HEK293 (cell line): ENCODE measurements at regions of chr1 and their contacts with region 1.

Region 1: DNA sequence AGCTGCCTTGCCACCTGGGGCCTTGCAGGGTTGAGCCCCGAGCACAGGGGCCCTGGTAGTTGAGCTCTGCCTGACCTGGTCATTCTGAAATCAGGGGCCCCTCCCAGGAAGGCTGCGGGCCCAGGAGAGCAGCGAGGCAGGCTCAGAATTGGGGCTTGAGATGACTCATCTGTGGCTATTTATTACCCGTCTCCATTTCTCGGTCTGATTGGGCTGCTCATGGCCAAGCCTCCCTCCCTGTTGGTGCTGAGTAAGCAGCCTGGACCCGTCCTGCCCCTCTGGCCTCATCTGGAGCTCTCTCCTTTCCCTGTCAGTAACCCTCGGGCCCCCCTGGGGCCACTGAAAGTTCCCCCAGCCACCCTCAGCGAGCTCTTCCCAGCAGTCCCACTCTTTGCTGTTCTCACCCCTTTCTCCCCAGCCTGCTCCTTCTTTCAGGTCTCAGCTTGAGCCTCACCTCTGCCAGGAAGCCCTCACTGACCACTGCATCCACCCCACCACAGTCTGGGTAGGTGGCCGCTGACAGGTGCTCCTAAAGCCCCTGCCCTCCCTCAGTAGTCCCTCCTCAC is 11.0 kb upstream of the TNFRSF8 start:
- H3K4me3 ChIP-seq: no peak overlapping the region
- H3K27ac ChIP-seq: no peak overlapping the region
- H3K4me1 ChIP-seq: no peaks in the 10 kb centered on the region
- CTCF ChIP-seq: no peak

Region 2: GRCh38 chr1:11961230-11961629 is 90.9 kb before region 1 on chr1:
- CTCF ChIA-PET with region 1: no interaction called
- POLR2A ChIA-PET with region 1: no interaction called
- H3K4me3 ChIP-seq: no peak overlapping the region
- H3K27ac ChIP-seq: no peak overlapping the region; the same call in 1 of the 2 replicates
- H3K4me1 ChIP-seq: no peaks in the 10 kb centered on the region
- CTCF ChIP-seq: no peak

Region 3: GRCh38 chr1:12078938-12079861 is 27.1 kb after region 1 on chr1:
- CTCF ChIA-PET with region 1: interaction called, 15 read pairs
- POLR2A ChIA-PET with region 1: no interaction called
- H3K4me3 ChIP-seq: no peak overlapping the region
- H3K27ac ChIP-seq: no peak overlapping the region
- H3K4me1 ChIP-seq: no peaks in the 10 kb centered on the region
- CTCF ChIP-seq: peak; percentile 63

Region 4: GRCh38 chr1:12143631-12144155 is 91.6 kb after region 1 on chr1:
- CTCF ChIA-PET with region 1: no interaction called
- POLR2A ChIA-PET with region 1: no interaction called
- H3K4me3 ChIP-seq: no peak overlapping the region
- H3K27ac ChIP-seq: peak overlapping the region; percentile 17; the same call in 1 of the 2 replicates
- H3K4me1 ChIP-seq: peaks cover 6% of the 10 kb centered on the region; the same call in 1 of the 2 replicates
- CTCF ChIP-seq: no peak